Brain microvascular endothelial cell (primary cell): ENCODE measurements at regions of chr17 and their contacts with region 1.

Region 1: GRCh38 chr17:27526604-27527230 is 70.5 kb downstream of the KSR1 start:
- DNase-seq: peak; percentile 46
- H3K4me3 ChIP-seq: no peak overlapping the region
- H3K27ac ChIP-seq: no peak overlapping the region
- H3K27me3 ChIP-seq: no peaks in the 10 kb centered on the region
- CTCF ChIP-seq: no peak

Region 2: GRCh38 chr17:27293898-27294688 is 232.6 kb before region 1 on chr17 and contains the start of gene WSB1:
- in situ Hi-C with region 1: no loop called
- DNase-seq: peak; percentile 84
- H3K4me3 ChIP-seq: peak within 1 kb of the TSS; percentile 99
- H3K27ac ChIP-seq: peak within 1 kb of the TSS; percentile 97
- H3K27me3 ChIP-seq: no peaks in the 10 kb centered on the region
- CTCF ChIP-seq: no peak

Region 3: GRCh38 chr17:27430882-27431491 is 95.7 kb before region 1 on chr17:
- in situ Hi-C with region 1: loop called (anchors 25 kb)
- DNase-seq: peak; percentile 38
- H3K4me3 ChIP-seq: no peak overlapping the region
- H3K27ac ChIP-seq: no peak overlapping the region
- H3K27me3 ChIP-seq: no peaks in the 10 kb centered on the region
- CTCF ChIP-seq: peak; percentile 88